ENCODE measurements at regions of chr9 and their contacts with region 1.

Region 1: GRCh38 chr9:85392260-85392659 is 349.5 kb downstream of the AGTPBP1 start:
- DNase-seq: no peak
- H3K4me3 ChIP-seq: no peak overlapping the region
- H3K27ac ChIP-seq: no peak overlapping the region
- H3K4me1 ChIP-seq: no peaks in the 10 kb centered on the region
- H3K27me3 ChIP-seq: no peaks in the 10 kb centered on the region
- CTCF ChIP-seq: no peak
- POLR2A ChIP-seq: no peak

Region 2: DNA sequence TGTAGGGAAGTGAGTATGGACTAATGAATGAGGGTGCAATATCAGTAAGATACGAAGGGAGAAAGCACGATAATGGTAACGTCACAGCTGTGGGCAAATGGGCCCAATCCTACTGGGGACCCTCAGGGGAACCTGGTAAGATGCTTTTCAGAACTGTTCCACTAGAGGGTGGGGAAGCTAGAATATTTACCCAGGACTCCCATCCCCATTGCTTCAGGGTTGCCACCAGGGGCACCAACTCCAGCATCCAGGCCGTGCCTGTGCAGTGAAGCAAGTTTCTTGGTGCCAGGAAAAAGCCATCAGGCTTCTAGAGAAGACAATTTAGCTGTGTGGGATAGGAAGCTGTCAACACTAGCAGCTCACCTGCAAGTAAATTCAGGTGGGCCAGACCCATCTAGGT is 59.8 kb before region 1 on chr9:
- intact Hi-C with region 1: loop called (anchors 10 kb)
- DNase-seq: no peak
- H3K4me3 ChIP-seq: no peak overlapping the region
- H3K27ac ChIP-seq: no peak overlapping the region
- H3K4me1 ChIP-seq: no peaks in the 10 kb centered on the region
- H3K27me3 ChIP-seq: no peaks in the 10 kb centered on the region
- CTCF ChIP-seq: no peak
- POLR2A ChIP-seq: no peak